ENCODE measurements at regions of chr1 and their contacts with region 1.

Region 1: DNA sequence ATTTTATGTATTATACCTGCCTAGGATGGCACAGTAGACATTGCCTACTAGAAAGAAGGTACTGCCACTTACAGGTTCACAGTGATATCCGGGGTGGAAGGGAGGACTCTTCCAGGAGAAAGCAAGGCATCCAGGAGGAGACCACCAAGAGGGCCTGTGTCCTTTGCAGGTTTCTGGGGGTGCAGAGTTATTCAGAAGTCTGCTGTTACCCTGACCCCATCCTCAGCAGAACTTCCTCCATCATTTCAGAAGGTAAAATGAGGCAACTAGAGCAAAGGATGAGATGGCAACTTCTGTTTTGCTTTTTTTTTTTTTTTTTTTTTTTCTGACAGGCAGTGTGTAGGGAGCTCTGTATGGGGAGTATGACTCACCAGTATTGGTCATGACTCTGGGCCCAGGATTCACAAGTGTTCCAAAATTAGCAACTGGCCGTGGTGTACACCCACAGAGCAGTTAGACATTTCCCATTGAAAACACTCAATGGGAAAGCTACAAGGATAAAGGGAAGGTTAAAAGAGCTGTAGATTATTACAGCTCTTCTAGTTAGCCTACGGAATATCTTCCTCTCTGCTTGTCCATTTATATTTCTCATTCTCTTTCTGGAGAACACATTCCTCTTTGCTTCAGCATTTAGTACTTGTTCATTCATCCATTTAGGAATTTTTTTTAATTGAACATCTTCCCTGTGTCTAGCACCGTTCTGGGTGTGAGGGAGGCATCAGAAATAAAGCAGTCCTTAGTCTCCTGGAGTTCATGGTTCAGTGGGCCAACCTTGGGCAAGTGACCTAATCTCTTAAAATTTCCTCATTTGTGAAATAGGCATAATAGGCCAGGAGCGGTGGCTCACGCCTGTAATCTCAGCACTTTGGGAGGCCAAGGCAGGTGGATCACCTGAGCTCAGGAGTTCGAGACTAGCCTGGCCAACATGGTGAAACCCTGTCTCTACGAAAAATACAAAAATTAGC is 50.5 kb upstream of the PPP2R5A start:
- DNase-seq: peak; percentile 74
- H3K4me3 Mint-ChIP-seq: peak overlapping the region; percentile 46
- H3K27ac Mint-ChIP-seq: peak overlapping the region; percentile 80
- H3K4me1 Mint-ChIP-seq: peaks cover 51% of the 10 kb centered on the region
- H3K27me3 Mint-ChIP-seq: no peaks in the 10 kb centered on the region

Region 2: DNA sequence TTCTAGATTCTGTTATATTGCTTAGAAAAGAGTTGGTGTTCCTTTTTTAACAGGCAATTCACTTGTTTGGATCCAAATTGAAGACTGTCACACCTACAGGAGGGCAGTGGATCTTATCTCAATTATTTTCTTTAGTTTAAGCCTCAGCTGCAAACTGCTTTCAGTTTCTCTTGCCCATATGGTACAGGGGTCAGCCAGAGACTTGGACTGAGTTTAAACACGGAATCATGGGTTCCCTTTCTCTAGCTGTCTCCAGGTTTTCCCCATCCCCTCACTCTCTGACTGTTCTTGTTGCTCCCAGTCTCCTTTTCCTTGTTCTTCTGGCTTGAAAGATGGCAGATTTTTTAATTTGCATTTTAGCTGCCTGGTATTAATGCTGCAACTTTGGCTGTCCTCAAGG is 180.7 kb before region 1 on chr1:
- intact Hi-C with region 1: no loop called
- DNase-seq: no peak
- H3K4me3 Mint-ChIP-seq: no peak overlapping the region
- H3K27ac Mint-ChIP-seq: no peak overlapping the region
- H3K4me1 Mint-ChIP-seq: peaks cover 14% of the 10 kb centered on the region
- H3K27me3 Mint-ChIP-seq: no peaks in the 10 kb centered on the region

Region 3: DNA sequence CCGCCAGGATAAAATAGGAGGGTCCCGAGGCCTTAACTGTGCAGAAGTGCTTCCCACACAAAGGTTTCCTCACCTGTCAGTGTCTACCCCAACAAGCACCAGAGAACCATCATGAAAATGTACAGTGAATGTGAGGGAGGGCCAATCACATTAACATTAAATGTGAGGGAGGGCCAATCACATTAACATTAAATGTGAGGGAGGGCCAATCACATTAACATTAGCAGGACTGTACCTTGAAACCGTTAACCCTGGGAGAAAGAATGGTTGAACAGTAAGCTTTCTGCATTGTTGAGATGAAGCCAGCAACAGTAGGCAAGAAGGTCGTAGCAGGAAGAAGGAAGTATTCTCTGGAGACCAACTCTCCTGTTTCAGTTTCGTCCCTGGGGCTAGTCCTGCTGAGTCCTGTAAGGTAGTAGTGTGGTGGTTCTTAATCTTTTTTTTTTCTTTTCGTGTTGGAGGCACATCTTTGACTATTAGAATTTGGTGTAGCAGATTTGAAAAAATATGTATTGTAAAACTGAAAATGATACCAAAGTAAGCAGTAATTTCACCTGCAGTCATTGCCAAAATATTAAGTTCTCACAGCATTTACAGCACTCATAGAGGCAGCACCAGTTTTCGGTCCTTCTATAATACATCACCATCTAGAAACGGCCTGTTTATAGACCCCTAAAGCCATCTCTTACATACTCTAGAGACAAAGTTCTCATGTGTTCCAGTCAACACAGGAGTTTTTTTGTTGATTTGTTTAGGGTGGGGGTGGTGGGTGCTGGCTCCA is 48.1 kb before region 1 on chr1:
- intact Hi-C with region 1: loop called (anchors 5 kb)
- DNase-seq: peak; percentile 81
- H3K4me3 Mint-ChIP-seq: peak overlapping the region; percentile 74
- H3K27ac Mint-ChIP-seq: peak overlapping the region; percentile 85
- H3K4me1 Mint-ChIP-seq: peaks cover 40% of the 10 kb centered on the region
- H3K27me3 Mint-ChIP-seq: peaks cover 3% of the 10 kb centered on the region

Region 4: DNA sequence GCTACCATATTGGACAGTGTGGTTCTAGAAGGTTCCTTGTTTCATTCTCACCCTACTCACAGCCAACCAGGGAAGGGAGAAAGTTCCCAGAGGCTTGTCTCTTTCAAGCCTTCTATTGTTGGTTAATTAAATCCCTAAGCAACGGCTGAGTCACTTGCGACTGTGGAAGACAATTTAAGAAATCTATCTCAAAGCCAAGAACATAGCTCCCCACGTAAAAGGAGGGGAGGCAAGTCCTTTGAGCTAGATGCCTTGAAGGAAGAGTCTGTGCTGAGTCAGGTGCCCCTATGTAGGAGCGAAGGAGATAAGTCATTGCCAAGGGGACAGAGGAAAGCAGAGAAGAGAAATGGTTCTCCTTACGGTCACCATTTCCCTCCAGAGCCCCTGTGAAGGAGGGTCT is 28.9 kb before region 1 on chr1:
- intact Hi-C with region 1: no loop called
- DNase-seq: no peak
- H3K4me3 Mint-ChIP-seq: no peak overlapping the region
- H3K27ac Mint-ChIP-seq: no peak overlapping the region
- H3K4me1 Mint-ChIP-seq: no peaks in the 10 kb centered on the region
- H3K27me3 Mint-ChIP-seq: peaks cover 2% of the 10 kb centered on the region

Measured in activated CD4-positive, alpha-beta T cell treated with anti-CD3 and anti-CD28 coated beads, Interleukin-2, amount 10 ng/mL, durations not matched to agents 24 days and 14 days (primary cell).